Left colon (tissue), 2 donors: ENCODE measurements at regions of chr1 and their contacts with region 1.

Region 1: DNA sequence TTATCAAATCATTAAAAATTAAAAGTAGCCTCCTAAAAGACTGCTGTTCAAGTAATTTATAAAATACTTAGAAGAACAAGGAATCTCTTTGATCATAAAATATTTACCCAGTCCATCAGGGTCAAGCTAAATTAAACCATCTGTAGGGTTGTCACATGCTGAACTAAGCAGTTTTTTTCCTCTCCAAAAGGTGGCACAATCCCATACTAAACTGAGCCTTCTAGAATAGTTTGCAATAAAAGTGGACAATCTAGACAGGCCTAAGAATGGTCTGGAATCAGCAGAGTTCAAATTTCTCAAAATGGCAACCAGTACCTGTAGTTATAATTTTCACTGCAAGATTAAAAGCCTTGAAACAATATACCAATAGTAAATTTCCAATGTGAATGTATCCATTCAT is 194.8 kb downstream of the EIF4G3 start:
- DNase-seq: no peak
- ATAC-seq: peak; percentile 80

Region 2: DNA sequence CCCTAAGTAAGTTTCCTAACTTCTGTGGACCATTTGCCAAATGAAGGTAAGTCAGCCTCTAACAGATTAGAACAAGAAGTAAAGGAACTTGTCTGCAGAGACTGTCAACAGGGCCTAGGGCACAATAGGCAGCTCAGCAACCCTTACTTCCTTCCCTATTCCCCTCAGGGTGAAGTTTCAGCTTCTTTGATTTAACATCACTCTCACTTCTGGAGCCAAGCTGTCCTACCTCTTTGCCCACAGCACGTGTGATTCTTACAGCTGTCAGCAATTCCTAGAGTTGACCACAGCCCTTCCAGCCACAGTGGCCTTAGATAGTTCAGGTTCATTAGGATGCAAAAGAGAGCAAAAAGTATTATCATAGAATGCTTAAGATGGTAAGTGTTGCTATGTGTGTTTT is 202.4 kb after region 1 on chr1:
- intact Hi-C with region 1: loop called in 1 of 2 experiments (anchors 10 kb)
- DNase-seq: no peak
- ATAC-seq: peak; percentile 7

Region 3: DNA sequence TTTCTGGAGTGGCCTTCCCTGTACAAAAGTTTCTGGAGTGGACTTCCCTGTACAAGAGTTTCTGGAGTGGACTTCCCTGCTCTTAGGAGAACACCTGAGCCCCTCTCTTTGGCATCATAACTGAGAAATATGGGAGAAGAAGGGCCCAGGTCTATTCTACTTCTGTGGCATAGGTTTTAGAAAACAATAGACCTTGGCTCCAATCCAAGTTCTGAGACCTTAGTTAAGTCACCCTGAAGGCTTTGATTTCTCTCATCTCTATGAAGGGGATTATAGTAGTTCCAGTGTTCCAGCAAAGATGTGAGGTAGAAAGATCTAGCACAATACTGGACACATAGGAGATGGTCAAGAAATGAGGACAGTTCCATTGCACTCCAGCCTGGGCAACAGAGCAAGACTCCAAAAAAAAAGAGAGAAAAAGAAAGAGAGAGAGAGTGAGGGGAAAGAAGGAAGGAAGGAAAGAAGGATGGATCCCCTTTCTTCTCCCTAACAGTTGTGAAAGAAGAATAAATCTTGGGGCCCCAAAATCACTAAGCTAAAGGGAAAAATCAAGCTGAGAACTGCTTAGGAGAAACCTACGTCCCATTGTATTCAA is 208.1 kb after region 1 on chr1:
- intact Hi-C with region 1: loop called (anchors 5 to 10 kb)
- DNase-seq: no peak
- ATAC-seq: peak; percentile 15